ENCODE measurements at regions of chr22 and their contacts with region 1.

Region 1: DNA sequence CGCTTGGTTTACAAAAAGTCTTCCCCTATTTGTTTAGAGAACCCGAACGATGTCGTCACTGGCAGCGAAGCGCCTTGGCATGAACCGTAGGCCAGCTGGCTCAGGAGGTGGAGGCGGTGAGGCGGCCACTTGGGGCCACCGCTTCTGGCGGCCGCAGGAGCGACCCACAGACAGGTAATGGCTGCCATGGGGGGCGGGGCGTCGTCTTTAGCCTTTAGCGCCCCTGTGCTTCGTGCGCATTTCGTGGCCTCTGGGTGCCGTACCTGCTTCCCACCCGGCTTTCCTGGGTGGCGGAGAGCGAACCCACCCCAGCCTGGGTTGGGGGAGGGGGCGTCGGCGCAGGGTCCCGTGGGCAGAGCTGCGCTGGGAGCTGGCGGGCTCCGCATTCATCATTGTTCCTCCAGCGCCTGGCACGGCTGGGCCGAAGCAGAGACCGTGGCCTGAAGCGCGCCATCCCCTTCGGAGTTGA is 469 bp upstream of the OSBP2 start:
- DNase-seq: peak; percentile 44
- H3K4me3 Mint-ChIP-seq: peak overlapping the region; percentile 88
- H3K27ac Mint-ChIP-seq: no peak overlapping the region
- H3K4me1 Mint-ChIP-seq: peaks cover 21% of the 10 kb centered on the region
- H3K27me3 Mint-ChIP-seq: peaks cover 11% of the 10 kb centered on the region

Region 2: GRCh38 chr22:30649430-30650007 is 44.7 kb before region 1 on chr22:
- intact Hi-C with region 1: loop called (anchors 1 kb)
- DNase-seq: peak; percentile 72
- H3K4me3 Mint-ChIP-seq: peak overlapping the region; percentile 45
- H3K27ac Mint-ChIP-seq: peak overlapping the region; percentile 89
- H3K4me1 Mint-ChIP-seq: peaks cover 47% of the 10 kb centered on the region
- H3K27me3 Mint-ChIP-seq: no peaks in the 10 kb centered on the region

Region 3: DNA sequence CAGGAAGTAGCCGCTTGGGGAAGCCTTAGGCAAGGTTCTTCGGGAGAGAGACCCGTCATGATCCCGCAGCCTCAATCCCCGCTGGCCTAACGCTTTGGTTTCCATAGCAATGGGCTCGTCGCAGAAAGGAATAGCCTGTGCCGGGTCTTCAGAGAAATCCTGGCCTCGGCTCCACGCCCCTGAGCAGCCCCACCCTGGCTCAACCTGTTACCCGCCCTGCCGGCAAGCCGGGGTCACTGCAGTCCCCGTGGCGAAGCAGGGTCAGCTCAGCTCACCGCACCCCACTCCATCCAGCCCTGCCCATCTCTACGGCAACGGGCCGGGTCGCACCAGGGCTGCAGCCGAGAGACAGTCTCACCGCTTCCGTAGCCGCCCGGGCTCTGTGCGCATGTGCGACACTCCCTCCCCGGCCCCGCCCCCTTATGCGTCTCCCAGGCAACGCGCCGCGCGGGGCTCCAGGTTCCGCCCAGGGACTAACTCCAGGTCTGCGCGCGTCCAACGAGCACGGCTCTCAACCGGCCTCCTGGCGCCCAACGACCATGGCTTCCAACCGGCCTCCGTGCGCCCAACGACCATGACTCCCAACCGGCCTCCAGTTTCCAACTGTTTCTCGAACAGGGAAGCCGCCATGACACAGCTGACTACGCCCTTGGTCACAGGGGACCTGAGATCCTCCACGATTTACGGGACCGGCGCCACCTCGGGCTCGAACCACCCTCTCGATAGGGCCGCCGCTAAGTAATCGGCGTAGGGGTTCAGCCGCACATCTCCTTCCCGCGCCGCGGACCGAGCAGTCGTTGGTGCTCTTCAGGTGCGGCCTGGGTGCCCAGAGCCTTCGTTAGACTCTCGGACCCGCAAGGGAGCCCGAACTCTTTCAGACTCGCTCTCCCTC is 26.5 kb before region 1 on chr22 and contains the start of gene DUSP18:
- intact Hi-C with region 1: loop called (anchors 1 kb)
- DNase-seq: peak; percentile 92
- H3K4me3 Mint-ChIP-seq: peak within 1 kb of the TSS; percentile 93
- H3K27ac Mint-ChIP-seq: peak within 1 kb of the TSS; percentile 83
- H3K4me1 Mint-ChIP-seq: peaks cover 32% of the 10 kb centered on the region
- H3K27me3 Mint-ChIP-seq: peaks cover 7% of the 10 kb centered on the region
- total RNA-seq, gene DUSP18: 9.6 and 9.8 TPM in 2 replicates

Region 4: GRCh38 chr22:30754971-30755756 is 61.0 kb after region 1 on chr22:
- intact Hi-C with region 1: loop called (anchors 1 kb)
- DNase-seq: peak; percentile 45
- H3K4me3 Mint-ChIP-seq: no peak overlapping the region
- H3K27ac Mint-ChIP-seq: peak overlapping the region; percentile 29
- H3K4me1 Mint-ChIP-seq: peaks cover 11% of the 10 kb centered on the region
- H3K27me3 Mint-ChIP-seq: peaks cover 4% of the 10 kb centered on the region